Transverse colon (tissue), 4 donors: ENCODE measurements at regions of chr3 and their contacts with region 1.

Region 1: GRCh38 chr3:45751537-45752242 is 44.6 kb downstream of the SLC6A20 start:
- DNase-seq: no peak
- H3K4me3 ChIP-seq: no peak overlapping the region
- H3K27ac ChIP-seq: no peak overlapping the region
- H3K4me1 ChIP-seq: no peaks in the 10 kb centered on the region
- H3K27me3 ChIP-seq: no peaks in the 10 kb centered on the region
- CTCF ChIP-seq: no peak
- EP300 ChIP-seq: no peak
- POLR2A ChIP-seq: no peak

Region 2: DNA sequence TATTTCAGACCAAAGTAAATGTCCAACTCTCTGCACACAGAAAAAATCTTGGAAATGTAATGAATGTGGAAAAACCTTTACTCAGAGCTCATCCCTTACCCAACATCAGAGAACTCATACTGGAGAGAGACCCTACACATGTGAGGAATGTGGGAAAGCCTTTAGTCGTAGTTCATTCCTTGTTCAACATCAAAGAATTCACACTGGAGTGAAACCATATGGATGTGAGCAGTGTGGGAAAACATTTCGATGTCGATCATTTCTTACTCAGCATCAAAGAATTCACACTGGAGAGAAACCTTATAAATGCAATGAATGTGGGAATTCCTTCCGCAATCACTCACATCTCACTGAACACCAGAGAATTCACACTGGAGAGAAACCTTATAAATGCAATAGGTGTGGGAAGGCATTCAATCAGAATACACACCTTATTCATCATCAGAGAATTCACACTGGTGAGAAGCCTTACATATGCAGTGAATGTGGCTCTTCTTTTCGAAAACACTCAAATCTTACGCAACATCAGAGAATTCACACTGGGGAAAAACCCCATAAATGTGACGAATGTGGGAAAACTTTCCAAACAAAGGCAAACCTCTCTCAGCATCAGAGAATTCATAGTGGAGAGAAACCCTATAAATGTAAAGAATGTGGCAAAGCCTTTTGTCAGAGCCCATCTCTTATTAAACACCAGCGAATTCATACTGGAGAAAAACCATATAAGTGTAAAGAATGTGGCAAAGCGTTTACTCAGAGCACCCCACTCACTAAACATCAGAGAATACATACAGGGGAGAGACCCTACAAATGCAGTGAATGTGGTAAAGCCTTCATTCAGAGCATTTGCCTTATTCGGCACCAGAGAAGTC is 1030.2 kb before region 1 on chr3:
- in situ Hi-C with region 1: no loop called
- intact Hi-C with region 1: loop called (anchors 5 kb)
- DNase-seq: no peak
- H3K4me3 ChIP-seq: no peak overlapping the region
- H3K27ac ChIP-seq: no peak overlapping the region
- H3K4me1 ChIP-seq: no peaks in the 10 kb centered on the region
- H3K27me3 ChIP-seq: no peaks in the 10 kb centered on the region
- CTCF ChIP-seq: no peak
- EP300 ChIP-seq: no peak
- POLR2A ChIP-seq: no peak

Region 3: DNA sequence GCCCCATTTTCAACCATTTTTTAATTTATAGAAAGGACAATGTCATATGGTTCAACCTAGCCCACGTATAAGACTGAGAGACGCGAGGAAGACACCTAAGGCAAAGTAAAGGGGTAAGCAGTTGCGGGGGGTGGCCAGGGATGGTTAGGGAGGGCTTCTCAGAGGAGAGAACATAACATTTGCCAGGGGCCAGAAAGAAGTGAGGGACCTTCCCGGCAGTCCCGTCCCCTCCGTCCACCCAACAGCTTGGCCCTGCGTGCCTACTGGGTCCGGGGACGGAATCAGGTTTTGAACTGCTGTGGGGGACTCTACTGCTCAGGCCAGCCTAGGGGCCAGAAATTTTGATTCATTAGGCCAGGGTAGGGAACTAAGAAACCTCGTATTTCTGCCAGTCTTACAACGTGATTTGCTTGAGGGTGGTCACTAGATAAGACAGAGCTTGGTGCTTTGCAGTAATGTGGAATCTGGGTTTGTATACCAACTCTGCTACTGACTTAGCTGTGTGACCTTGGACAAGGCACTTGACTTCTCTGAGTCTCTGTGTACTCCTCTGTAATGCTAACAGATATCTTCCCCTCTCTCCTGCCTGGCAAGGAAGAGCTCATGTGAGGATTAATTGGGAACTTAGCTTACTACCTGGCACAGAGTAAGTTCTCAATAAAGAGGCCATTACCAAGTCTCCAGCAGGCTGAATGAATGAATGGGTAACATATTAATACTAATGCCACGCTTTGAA is 45.4 kb after region 1 on chr3:
- in situ Hi-C with region 1: no loop called
- intact Hi-C with region 1: loop called (anchors 1 kb)
- DNase-seq: no peak
- H3K4me3 ChIP-seq: peak overlapping the region in 2 of 4 donors; percentile 37 to 46
- H3K27ac ChIP-seq: no peak overlapping the region
- H3K4me1 ChIP-seq: peaks cover 6 to 10% (median 10%) of the 10 kb centered on the region in 4 donors
- H3K27me3 ChIP-seq: peaks cover 47% of the 10 kb centered on the region
- CTCF ChIP-seq: no peak
- EP300 ChIP-seq: no peak
- POLR2A ChIP-seq: no peak

Region 4: DNA sequence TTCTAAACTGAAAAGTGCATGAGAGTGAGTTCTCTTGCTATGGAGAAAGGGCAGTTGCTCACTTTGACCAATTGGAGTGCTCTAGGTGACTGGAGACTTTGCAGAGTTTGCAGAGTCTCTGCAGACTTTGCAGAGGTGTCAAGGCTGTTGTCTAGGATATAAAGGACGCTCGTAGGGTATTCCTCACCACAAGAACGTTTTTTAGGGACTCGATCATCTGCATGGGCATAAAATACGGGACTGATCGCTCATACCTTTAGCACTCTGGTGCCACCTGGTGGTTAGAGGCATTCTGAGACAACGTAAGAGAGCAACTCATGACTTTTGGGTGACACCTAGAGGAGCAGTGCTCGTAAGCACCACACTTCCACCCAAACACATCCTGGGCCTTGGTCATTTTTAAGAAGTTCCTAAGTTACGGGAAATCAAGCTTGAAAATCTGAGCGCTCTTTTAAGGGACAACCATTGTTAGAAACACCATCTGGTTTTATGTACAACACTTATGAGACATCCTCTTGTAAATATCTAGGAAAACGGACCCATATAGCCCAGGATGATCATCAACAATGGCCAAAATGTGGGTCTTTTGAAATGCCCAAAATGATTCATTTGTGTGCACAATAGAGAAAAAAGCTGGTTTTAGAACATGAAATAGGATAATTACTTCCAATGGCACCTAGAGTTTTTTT is 327.2 kb after region 1 on chr3:
- in situ Hi-C with region 1: loop called (anchors 10 to 25 kb)
- intact Hi-C with region 1: loop called (anchors 10 kb)
- DNase-seq: peak; percentile 93
- H3K4me3 ChIP-seq: peak overlapping the region in 1 of 4 donors; percentile 27
- H3K27ac ChIP-seq: no peak overlapping the region
- H3K4me1 ChIP-seq: peaks cover 0 to 8% (median 0%) of the 10 kb centered on the region in 4 donors
- H3K27me3 ChIP-seq: no peaks in the 10 kb centered on the region
- CTCF ChIP-seq: peak; percentile 94 to 99 (median 97)
- EP300 ChIP-seq: no peak
- POLR2A ChIP-seq: no peak

Region 5: DNA sequence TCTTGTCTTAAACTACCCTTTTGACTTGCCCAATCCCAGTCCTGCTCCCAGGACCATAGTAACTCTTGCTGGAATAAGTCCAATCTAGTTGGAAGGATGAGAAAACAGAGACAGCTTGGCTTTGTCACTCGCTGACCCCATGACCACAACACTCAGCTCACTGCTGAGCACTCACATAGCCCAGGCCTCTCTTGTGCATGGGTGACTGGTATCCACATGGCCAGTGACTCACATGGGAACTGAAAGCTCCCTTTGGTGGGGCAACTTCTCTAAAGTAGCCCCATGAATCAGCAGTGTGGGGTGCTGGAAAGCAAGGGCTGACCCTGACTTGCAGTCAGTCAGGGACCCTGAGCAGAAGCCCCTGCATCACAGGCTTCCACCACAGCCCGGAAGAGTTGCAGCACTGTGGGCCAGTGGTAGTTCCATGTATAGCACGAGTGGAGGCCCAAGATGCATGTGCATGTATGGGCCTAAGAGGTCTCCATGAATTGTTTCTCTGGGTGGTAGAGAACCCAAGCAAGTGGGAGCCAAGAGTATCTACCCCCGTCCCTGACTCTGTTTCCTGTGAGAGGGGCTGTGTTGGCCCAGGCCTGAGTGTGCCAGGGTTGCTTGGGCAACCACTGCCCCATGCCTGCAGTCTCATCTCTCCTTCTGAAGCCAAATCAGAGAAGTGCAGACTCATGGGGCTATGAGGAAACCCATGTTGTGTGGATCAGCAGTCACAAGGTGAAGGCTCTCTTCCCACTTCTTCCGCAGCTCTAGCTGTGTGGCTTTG is 337.7 kb after region 1 on chr3:
- in situ Hi-C with region 1: loop called in 3 of 4 experiments (anchors 10 to 25 kb)
- intact Hi-C with region 1: loop called (anchors 10 kb)
- DNase-seq: peak; percentile 58
- H3K4me3 ChIP-seq: no peak overlapping the region
- H3K27ac ChIP-seq: peak overlapping the region; percentile 37 to 48 (median 42)
- H3K4me1 ChIP-seq: peaks cover 0 to 15% (median 1%) of the 10 kb centered on the region in 4 donors
- H3K27me3 ChIP-seq: no peaks in the 10 kb centered on the region
- CTCF ChIP-seq: no peak
- EP300 ChIP-seq: peak; percentile 15
- POLR2A ChIP-seq: no peak